ENCODE measurements at regions of chr18 and their contacts with region 1.

Region 1: DNA sequence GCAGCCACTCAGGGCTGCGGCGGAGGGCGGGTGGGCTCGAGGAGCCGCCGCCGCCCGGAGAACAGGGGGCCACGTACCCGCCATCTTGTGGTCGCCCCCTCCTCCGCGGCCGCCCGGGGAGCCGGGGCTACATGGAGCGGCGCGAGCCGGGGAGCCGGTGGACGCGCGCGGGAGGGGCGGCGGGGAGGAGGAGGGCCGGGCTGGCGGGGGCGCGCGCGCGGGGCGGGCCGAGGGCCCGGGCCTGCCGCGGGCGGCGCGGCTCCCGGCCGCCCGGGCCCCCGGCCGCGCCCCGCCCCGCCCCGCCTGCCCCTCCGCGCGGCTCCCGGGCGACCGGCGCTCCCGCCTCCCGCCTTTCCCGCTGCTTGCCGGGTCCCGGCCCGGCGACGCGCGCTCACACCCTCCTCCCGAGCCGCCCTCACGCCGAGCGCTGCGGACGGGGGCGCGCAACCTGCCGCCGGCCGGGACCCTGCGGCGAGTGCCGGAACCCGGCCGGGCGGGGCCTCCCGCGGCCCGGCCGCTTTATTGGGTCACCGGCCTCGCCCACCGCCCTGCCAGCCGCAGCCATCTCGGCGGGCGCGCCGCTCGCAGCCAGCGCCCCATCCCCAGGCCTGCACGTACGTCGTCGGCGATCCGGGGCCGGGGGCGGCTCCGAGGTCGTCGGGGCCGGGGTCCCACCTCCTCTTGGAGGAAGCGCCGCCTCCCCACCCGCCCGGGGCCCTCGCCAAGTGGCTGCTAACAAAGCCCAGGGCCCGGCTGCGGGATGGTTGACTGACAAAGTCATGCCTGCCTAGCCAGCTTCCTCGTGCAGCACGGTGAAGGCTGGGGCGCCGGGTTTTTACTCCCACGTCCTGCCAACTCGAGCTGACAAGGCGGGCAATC is at the start of gene PPP4R1:
- DNase-seq: peak; percentile 61 to 83 (median 74)
- H3K4me3 ChIP-seq: peak within 1 kb of the TSS; percentile 62 to 91 (median 81)
- H3K27ac ChIP-seq: peak within 1 kb of the TSS; percentile 83 to 99 (median 95)
- H3K27me3 ChIP-seq: no peaks in the 10 kb centered on the region
- CTCF ChIP-seq: peak in 3 of 56 donors; percentile 6 to 22 (median 12)
- total RNA-seq, gene PPP4R1: 63.4 to 122 (median 88.2) TPM

Region 2: DNA sequence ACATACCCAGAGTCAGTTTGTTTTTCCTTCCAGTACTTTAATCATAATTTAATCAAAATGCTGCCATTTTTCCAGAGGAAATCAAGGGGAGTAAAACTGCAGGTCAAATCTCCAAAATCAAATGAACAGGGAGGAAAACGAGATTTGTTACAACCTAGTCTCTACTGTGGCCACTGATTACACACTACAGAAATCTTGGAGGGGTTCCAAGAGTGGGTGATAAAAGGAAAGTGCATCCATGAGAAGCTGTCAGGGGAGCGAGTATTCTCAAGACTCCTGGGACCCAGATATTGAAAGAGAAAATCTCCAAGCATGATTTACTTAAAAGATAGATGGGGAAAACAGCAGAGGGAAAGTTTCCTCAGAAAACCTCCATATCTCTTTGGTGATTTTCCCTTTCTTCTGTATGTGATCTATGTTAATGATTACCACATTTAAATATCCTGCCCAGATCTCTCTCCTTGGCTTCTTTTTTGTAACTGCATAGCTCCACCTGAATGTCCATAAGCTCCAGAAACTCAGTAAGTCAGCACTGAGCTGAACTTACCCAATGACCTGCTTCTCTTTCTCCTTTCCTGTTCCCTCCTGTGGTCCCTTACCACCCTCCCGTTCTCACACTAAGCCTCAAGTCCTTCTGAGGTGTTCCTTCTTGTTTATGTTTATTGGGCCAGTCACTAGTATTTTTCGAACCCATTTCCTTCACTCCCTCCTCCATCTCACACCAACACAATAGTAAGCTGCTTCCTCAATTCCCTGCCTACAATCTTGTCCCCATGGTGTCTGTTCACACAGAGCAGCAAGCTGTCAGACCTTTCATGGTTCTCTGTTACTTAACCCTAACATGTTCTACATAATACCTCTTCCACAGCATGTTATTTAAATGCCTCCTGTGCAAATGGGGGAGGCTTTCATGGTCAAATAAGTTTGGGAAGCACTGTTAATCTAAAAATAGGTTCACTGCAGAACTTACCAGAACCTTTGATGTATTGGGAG is 354.0 kb before region 1 on chr18:
- intact Hi-C with region 1: no loop called
- DNase-seq: no peak
- H3K4me3 ChIP-seq: no peak overlapping the region
- H3K27ac ChIP-seq: peak overlapping the region in 1 of 59 donors; percentile 20
- H3K27me3 ChIP-seq: no peaks in the 10 kb centered on the region
- CTCF ChIP-seq: no peak

Region 3: DNA sequence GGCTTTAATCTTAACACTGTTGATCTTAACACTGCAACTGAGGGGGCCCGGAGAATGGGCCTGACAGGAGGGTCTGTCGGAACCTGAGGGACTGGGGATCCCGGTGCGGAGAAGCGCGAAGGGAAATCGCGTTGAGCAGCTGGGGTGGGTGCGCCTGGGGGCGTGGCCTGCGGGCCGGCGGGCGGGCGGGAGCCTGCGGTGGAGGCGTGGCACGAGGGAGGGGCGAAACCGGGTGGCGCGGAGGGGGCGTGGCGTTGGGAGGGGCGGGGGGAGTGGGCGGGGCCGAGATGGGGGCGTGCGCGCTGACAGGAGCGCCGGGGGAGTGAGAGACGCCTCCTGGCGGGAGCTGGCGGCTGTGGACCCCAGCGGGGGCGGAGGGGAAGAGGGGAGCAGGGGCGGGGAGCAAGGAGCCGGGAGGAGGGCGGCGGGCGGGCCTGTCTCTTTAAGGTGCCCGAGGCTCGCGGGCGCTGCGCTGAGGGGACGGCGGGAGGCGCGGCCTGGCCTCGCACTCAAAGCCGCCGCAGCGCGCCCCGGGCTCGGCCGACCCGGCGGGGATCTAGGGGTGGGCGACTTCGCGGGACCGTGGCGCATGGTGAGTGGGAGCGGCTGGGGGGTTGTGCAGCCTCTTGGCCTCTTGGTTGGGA is 280.2 kb before region 1 on chr18 and contains the start of gene TWSG1:
- intact Hi-C with region 1: loop called in 1 of 2 experiments (anchors 10 kb)
- DNase-seq: peak; percentile 76 to 91 (median 88)
- H3K4me3 ChIP-seq: peak within 1 kb of the TSS; percentile 61 to 94 (median 87)
- H3K27ac ChIP-seq: peak within 1 kb of the TSS in 57 of 59 donors; percentile 39 to 93 (median 79)
- H3K27me3 ChIP-seq: no peaks in the 10 kb centered on the region
- CTCF ChIP-seq: peak in 52 of 56 donors; percentile 19 to 74 (median 46)
- total RNA-seq, gene TWSG1: 12.6 to 27.0 (median 18.1) TPM

Region 4: GRCh38 chr18:9535382-9535991 is 79.2 kb before region 1 on chr18:
- intact Hi-C with region 1: no loop called
- DNase-seq: peak; percentile 38 to 78 (median 54)
- H3K4me3 ChIP-seq: peak overlapping the region in 43 of 59 donors; percentile 0 to 48 (median 29)
- H3K27ac ChIP-seq: peak overlapping the region; percentile 18 to 93 (median 86)
- H3K27me3 ChIP-seq: no peaks in the 10 kb centered on the region
- CTCF ChIP-seq: peak in 8 of 56 donors; percentile 9 to 37 (median 20)

Region 5: DNA sequence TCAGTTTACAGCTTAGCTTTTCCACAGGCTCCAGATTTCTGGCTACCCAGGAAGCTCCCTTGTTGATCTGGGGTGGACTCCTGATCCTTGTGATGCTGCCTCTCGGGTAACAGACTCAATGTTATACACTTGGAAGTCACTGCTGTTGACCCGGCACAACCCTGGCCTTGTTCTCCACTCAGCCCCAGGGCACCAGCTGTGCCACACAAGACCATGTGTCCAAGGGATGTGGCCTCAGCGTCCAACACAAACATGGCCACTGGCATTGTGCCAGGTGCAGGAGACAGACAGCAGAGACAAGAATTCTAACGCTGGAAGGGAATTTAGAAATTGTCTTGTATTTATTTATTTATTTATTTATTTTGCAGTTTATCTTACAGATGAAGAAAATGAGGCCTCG is 38.8 kb after region 1 on chr18:
- intact Hi-C with region 1: loop called in 1 of 2 experiments (anchors 5 kb)
- DNase-seq: peak; percentile 17 to 89 (median 83)
- H3K4me3 ChIP-seq: no peak overlapping the region
- H3K27ac ChIP-seq: peak overlapping the region in 49 of 59 donors; percentile 33 to 88 (median 67)
- H3K27me3 ChIP-seq: no peaks in the 10 kb centered on the region
- CTCF ChIP-seq: peak in 1 of 56 donors; percentile 19

Region 6: GRCh38 chr18:9771261-9771976 is 156.8 kb after region 1 on chr18:
- intact Hi-C with region 1: loop called (anchors 2 to 10 kb)
- DNase-seq: peak; percentile 37 to 89 (median 83)
- H3K4me3 ChIP-seq: peak overlapping the region in 28 of 59 donors; percentile 1 to 49 (median 15)
- H3K27ac ChIP-seq: peak overlapping the region in 38 of 59 donors; percentile 0 to 85 (median 50)
- H3K27me3 ChIP-seq: no peaks in the 10 kb centered on the region
- CTCF ChIP-seq: peak; percentile 64 to 99 (median 96)

Region 7: GRCh38 chr18:11040823-11041656 is 1426.4 kb after region 1 on chr18:
- intact Hi-C with region 1: loop called in 1 of 2 experiments (anchors 10 kb)
- DNase-seq: peak in 4 of 10 donors; percentile 12 to 64 (median 47)
- H3K4me3 ChIP-seq: peak overlapping the region in 51 of 59 donors; percentile 1 to 61 (median 34)
- H3K27ac ChIP-seq: peak overlapping the region in 56 of 59 donors; percentile 11 to 92 (median 76)
- H3K27me3 ChIP-seq: no peaks in the 10 kb centered on the region
- CTCF ChIP-seq: peak; percentile 49 to 92 (median 80)